Activated T-helper 2 cell treated with anti-CD3 and anti-CD28 coated beads, Interferon-gamma antibody, Interleukin-2, Interleukin-4, amounts not matched to agents 10 μg/mL and 5 μg/mL and 100 μg/mL, durations not matched to agents 14 hours and 24 hours and 36 hours (primary cell): ENCODE measurements at regions of chr10 and their contacts with region 1.

Region 1: DNA sequence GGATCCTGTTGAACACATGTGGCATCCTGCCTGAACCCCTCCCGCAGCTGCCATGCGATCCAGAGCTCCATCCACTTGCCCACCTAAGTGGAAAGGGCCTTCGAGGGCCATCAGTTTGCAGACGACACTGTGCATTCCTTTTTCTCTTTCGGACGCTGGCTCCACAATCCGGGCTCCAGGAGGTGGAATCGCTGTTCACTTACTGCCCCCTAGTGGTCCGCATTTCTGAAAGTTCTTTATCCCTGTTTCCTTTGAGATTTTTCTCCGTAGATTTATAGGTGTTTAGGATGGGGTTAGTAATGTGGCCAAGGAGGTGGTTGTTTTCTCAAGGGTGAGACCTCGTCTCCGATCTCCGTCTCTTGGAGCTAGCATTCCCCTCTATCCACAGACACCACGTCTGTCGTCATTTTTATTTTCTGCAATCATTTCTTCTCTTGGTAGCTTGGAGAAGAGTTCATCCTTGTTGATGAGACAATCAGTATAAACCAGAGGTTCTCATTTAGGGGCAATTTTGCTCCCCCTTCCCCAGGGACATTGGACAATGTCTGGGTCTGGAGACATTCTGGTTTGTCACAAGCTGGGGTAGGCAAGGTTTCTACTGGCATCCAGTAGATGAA is 204.6 kb downstream of the ARHGAP21 start:
- DNase-seq: peak; percentile 11
- H3K4me3 Mint-ChIP-seq: no peak overlapping the region
- H3K27ac Mint-ChIP-seq: no peak overlapping the region
- H3K4me1 Mint-ChIP-seq: peaks cover 10% of the 10 kb centered on the region
- H3K27me3 Mint-ChIP-seq: peaks cover 1% of the 10 kb centered on the region

Region 2: GRCh38 chr10:24197263-24197662 is 321.8 kb before region 1 on chr10:
- intact Hi-C with region 1: loop called (anchors 10 kb)
- DNase-seq: no peak
- H3K4me3 Mint-ChIP-seq: no peak overlapping the region
- H3K27ac Mint-ChIP-seq: no peak overlapping the region
- H3K4me1 Mint-ChIP-seq: no peaks in the 10 kb centered on the region
- H3K27me3 Mint-ChIP-seq: peaks cover 1% of the 10 kb centered on the region

Region 3: GRCh38 chr10:24456322-24456721 is 62.8 kb before region 1 on chr10:
- intact Hi-C with region 1: no loop called
- DNase-seq: no peak
- H3K4me3 Mint-ChIP-seq: no peak overlapping the region
- H3K27ac Mint-ChIP-seq: no peak overlapping the region
- H3K4me1 Mint-ChIP-seq: peaks cover 7% of the 10 kb centered on the region
- H3K27me3 Mint-ChIP-seq: peaks cover 42% of the 10 kb centered on the region

Region 4: GRCh38 chr10:24502801-24503460 is 16.2 kb before region 1 on chr10:
- intact Hi-C with region 1: no loop called
- DNase-seq: no peak
- H3K4me3 Mint-ChIP-seq: no peak overlapping the region
- H3K27ac Mint-ChIP-seq: no peak overlapping the region
- H3K4me1 Mint-ChIP-seq: no peaks in the 10 kb centered on the region
- H3K27me3 Mint-ChIP-seq: peaks cover 14% of the 10 kb centered on the region

Region 5: DNA sequence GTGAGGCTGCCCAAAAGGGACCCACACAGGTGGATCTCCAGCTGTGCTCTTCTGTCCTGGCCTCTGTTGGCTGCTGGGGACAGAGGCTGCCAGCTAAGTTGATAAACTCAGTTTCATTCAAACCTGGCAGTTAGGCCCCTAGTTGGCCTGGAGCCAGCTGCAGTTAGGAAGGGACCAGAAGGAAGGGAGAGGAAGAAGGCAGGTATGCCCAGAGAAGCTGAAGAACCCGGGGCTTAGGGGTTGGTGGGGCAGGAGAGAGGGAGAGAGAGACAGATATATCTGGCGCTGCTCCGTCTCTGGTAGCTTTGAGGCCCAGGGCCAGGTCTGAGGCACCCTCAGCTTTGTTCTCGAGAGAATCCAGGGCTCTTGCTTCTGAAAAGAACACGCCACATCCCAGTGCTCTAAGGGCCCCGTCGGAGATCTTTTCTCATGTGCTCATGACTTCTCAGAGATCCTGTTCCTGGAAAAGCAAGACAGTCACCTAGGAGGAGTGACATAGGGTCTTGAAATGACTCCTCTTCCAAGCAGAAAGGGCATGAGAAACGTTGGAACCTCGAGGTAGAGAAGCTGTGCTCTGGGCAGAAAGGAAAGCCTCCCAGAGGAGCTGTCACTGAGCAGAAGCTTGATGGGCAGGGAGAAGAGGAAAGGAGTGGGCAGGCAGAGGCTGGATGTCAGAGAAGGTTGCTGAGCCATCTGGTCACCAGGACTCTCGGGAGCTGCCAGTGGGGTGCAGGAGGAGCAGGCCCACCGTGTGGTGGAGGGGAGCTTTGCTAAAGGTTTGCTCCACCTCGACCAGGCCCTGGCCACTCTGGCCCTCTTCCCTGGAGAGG is 51.0 kb after region 1 on chr10:
- intact Hi-C with region 1: no loop called
- DNase-seq: no peak
- H3K4me3 Mint-ChIP-seq: no peak overlapping the region
- H3K27ac Mint-ChIP-seq: no peak overlapping the region
- H3K4me1 Mint-ChIP-seq: peaks cover 3% of the 10 kb centered on the region
- H3K27me3 Mint-ChIP-seq: no peaks in the 10 kb centered on the region